GM12878 (cell line): ENCODE measurements at regions of chr10 and their contacts with region 1.

Region 1: DNA sequence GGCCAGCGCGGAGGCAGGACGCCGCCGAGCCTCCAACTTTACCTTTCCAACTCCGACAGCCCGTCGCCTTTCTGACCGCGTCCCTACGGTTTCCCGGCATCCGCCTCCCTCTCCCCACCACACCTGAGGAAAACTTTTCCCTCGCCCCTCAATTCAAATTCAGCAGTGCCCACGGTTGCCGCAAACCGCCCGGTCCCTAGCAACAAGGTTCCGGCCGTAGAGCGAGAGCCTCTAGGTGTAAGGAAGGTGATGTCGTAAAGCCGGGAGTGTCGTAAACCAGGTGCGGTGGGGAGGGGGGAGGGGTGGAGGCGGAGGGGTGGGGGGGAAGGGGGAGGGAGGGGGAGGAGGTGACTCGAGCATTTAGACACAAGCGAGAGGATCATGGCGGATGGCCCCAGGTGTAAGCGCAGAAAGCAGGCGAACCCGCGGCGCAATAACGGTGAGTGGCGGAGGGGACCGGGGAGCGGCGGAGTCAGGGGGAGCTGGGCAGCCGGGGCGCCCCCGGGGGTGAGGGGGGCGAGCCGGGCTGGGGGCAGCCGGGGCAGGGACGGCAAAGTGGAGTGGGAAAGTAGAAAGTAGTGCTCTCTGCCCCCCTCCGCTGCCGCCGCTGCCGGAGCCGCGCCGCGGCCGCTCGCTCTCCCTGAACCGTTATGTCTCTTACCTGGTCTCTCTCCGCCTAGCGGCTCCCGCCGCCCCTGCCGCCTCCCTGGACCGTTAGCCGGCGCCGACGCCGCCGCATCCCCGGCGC is at the start of gene ZEB1:
- DNase-seq: no peak
- ATAC-seq: peak; percentile 52
- H3K4me3 ChIP-seq: peak within 1 kb of the TSS; percentile 84
- H3K27ac ChIP-seq: peak within 1 kb of the TSS; percentile 100
- H3K4me1 ChIP-seq: peaks cover 7% of the 10 kb centered on the region
- H3K27me3 ChIP-seq: no peaks in the 10 kb centered on the region
- CTCF ChIP-seq: peak; percentile 29 to 53 (median 31); a peak in 4 of 6 replicates
- EP300 ChIP-seq: peak in 1 of 2 experiments; percentile 41; a peak in 1 of 4 replicates
- POLR2A ChIP-seq: peak; percentile 78
- RAD21 ChIP-seq: 0 out of 2 replicates have a peak, but pooled peaks have one; percentile 8
- polyA plus RNA-seq, gene ZEB1: 10.4 to 16.8 TPM

Region 2: GRCh38 chr10:31031558-31032257 is 287.3 kb before region 1 on chr10 and contains the start of gene ZNF438:
- CTCF ChIA-PET with region 1: interaction called, 5 read pairs
- POLR2A ChIA-PET with region 1: interaction called, 6 read pairs
- RAD21 ChIA-PET with region 1: interaction called, 8 read pairs
- SMC1A ChIA-PET with region 1: interaction called, 7 read pairs
- in situ Hi-C with region 1: no loop called
- intact Hi-C with region 1: loop called (anchors 2 kb)
- DNase-seq: peak; percentile 68
- ATAC-seq: peak; percentile 90
- H3K4me3 ChIP-seq: peak within 1 kb of the TSS; percentile 75
- H3K27ac ChIP-seq: peak within 1 kb of the TSS; percentile 97
- H3K4me1 ChIP-seq: peaks cover 2% of the 10 kb centered on the region; the same call in 1 of the 2 replicates
- H3K27me3 ChIP-seq: no peaks in the 10 kb centered on the region
- CTCF ChIP-seq: peak; percentile 69 to 80 (median 71)
- EP300 ChIP-seq: peak in 1 of 2 experiments; percentile 64; a peak in 1 of 4 replicates
- POLR2A ChIP-seq: peak; percentile 79
- RAD21 ChIP-seq: peak; percentile 39; the same call in 1 of the 2 replicates
- polyA plus RNA-seq, gene ZNF438: 0.93 to 0.99 TPM

Region 3: GRCh38 chr10:31133628-31134302 is 185.3 kb before region 1 on chr10:
- CTCF ChIA-PET with region 1: no interaction called
- POLR2A ChIA-PET with region 1: no interaction called
- RAD21 ChIA-PET with region 1: interaction called, 6 read pairs
- SMC1A ChIA-PET with region 1: no interaction called
- in situ Hi-C with region 1: no loop called
- intact Hi-C with region 1: loop called (anchors 10 kb)
- DNase-seq: peak; percentile 26
- ATAC-seq: peak; percentile 84
- H3K4me3 ChIP-seq: peak overlapping the region; percentile 69; the same call in 1 of the 2 replicates
- H3K27ac ChIP-seq: peak overlapping the region; percentile 71
- H3K4me1 ChIP-seq: peaks cover 11% of the 10 kb centered on the region
- H3K27me3 ChIP-seq: no peaks in the 10 kb centered on the region
- CTCF ChIP-seq: no peak
- EP300 ChIP-seq: peak in 1 of 2 experiments; percentile 34; a peak in 1 of 4 replicates
- POLR2A ChIP-seq: peak; percentile 77
- RAD21 ChIP-seq: no peak

Region 4: GRCh38 chr10:31179091-31179680 is 139.8 kb before region 1 on chr10:
- CTCF ChIA-PET with region 1: no interaction called
- POLR2A ChIA-PET with region 1: no interaction called
- RAD21 ChIA-PET with region 1: no interaction called
- SMC1A ChIA-PET with region 1: no interaction called
- in situ Hi-C with region 1: no loop called
- intact Hi-C with region 1: no loop called
- DNase-seq: no peak
- ATAC-seq: no peak
- H3K4me3 ChIP-seq: no peak overlapping the region
- H3K27ac ChIP-seq: no peak overlapping the region
- H3K4me1 ChIP-seq: no peaks in the 10 kb centered on the region
- H3K27me3 ChIP-seq: no peaks in the 10 kb centered on the region
- CTCF ChIP-seq: no peak
- EP300 ChIP-seq: no peak
- POLR2A ChIP-seq: no peak
- RAD21 ChIP-seq: no peak

Region 5: DNA sequence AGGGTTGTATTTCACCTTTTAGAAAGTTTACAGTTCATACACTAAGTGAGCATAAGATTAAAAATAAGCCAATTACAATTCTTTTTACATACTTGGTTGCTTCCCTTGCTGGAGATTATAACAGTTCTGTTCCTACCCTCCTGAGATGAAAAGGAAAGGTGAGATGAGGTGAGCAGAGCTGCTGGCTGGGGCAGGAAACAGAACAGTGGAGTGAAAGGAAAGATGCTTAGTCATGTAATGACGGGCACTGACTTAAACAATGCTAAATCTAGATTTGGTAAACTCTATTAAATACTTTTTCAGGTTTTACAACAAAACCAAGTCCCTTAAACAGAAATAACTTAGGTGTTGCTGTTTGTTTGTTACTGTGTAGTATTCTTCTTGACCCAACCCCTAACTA is 19.9 kb before region 1 on chr10:
- CTCF ChIA-PET with region 1: no interaction called
- POLR2A ChIA-PET with region 1: no interaction called
- RAD21 ChIA-PET with region 1: no interaction called
- SMC1A ChIA-PET with region 1: no interaction called
- in situ Hi-C with region 1: no loop called
- intact Hi-C with region 1: no loop called
- DNase-seq: no peak
- ATAC-seq: no peak; the same call in 2 of the 3 replicates
- H3K4me3 ChIP-seq: no peak overlapping the region
- H3K27ac ChIP-seq: no peak overlapping the region
- H3K4me1 ChIP-seq: no peaks in the 10 kb centered on the region
- H3K27me3 ChIP-seq: no peaks in the 10 kb centered on the region
- CTCF ChIP-seq: no peak
- EP300 ChIP-seq: no peak
- POLR2A ChIP-seq: no peak
- RAD21 ChIP-seq: no peak

Region 6: DNA sequence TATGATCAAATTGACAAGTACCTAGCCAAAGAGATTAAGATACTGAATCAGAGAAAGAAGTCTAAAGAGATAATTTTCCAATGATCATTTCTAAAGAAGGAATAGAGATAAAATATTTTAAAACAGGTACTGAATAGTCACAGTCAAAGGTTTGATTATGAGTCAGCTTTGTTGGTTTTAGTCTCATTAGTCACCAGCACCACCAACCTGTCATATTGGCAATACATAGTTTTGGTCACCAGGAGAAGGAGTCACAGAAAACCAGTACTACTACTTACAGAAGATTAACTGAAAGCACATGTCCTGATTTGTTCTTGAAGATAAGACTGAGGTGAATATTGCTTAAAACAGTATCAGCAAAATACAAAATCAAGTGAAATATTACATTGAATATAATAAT is 34.5 kb after region 1 on chr10:
- CTCF ChIA-PET with region 1: interaction called, 9 read pairs
- POLR2A ChIA-PET with region 1: interaction called, 3 read pairs
- RAD21 ChIA-PET with region 1: interaction called, 5 read pairs
- SMC1A ChIA-PET with region 1: interaction called, 7 read pairs
- in situ Hi-C with region 1: no loop called
- intact Hi-C with region 1: loop called (anchors 2 kb)
- DNase-seq: peak; percentile 73
- ATAC-seq: peak; percentile 90
- H3K4me3 ChIP-seq: no peak overlapping the region
- H3K27ac ChIP-seq: no peak overlapping the region; the same call in 1 of the 2 replicates
- H3K4me1 ChIP-seq: peaks cover 25% of the 10 kb centered on the region
- H3K27me3 ChIP-seq: no peaks in the 10 kb centered on the region
- CTCF ChIP-seq: peak; percentile 31 to 55 (median 33); a peak in 4 of 6 replicates
- EP300 ChIP-seq: peak; percentile 61 to 66; a peak in 2 of 4 replicates
- POLR2A ChIP-seq: no peak
- RAD21 ChIP-seq: peak; percentile 57

Region 7: GRCh38 chr10:31707093-31708039 is 388.3 kb after region 1 on chr10:
- CTCF ChIA-PET with region 1: no interaction called
- POLR2A ChIA-PET with region 1: no interaction called
- RAD21 ChIA-PET with region 1: no interaction called
- SMC1A ChIA-PET with region 1: no interaction called
- in situ Hi-C with region 1: no loop called
- intact Hi-C with region 1: loop called (anchors 5 kb)
- DNase-seq: peak; percentile 90
- ATAC-seq: peak; percentile 93
- H3K4me3 ChIP-seq: peak overlapping the region; percentile 52
- H3K27ac ChIP-seq: peak overlapping the region; percentile 92
- H3K4me1 ChIP-seq: peaks cover 31% of the 10 kb centered on the region
- H3K27me3 ChIP-seq: no peaks in the 10 kb centered on the region
- CTCF ChIP-seq: no peak
- EP300 ChIP-seq: peak; percentile 80 to 88
- POLR2A ChIP-seq: no peak
- RAD21 ChIP-seq: peak; percentile 28; the same call in 1 of the 2 replicates